Naive thymus-derived CD4-positive, alpha-beta T cell (primary cell): ENCODE measurements at regions of chr19 and their contacts with region 1.

Region 1: DNA sequence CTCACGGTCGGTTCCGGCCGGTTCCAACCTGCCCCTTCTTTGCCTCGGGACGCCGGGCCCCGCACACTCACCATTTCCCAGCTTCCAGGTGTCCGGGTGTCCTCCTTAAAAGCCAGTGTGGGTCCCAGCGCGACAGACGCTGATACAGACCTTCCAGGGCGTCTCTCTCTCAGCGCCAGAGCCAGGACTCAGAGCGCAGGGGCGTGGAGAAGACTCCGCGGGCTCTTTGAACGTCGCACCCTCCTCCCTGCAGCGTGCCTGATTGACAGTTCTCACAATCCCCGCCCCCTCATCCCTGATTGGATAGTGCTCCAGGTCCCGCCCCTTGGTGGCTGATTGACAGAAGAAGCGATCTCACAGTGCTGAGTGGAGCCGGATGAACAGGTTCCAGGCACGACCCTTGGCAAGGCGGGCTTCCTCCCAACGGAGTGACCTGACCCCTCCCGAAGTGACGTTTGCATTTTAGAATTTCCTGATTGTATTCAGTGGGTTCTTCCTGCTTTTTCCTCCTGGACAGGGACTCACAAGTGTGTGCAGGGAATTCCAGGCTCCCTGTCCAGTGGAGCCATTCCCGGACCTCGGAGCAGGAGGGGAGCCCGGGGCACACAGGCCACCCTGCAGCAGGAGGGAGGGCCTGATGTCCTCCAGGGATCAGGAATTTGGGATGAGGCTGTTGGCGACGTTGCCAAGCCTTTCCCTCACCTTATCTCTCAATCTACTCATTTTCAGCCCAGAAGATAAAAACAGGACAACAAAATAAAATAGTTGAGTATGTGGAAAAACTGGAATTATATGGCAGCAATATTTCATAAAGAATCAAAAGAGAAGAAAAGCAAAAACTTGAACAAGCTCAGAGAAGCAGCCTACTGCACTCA is at the start of gene ZNF823:
- DNase-seq: peak; percentile 85 to 98 (median 96)
- ATAC-seq: peak; percentile 100
- H3K4me3 ChIP-seq: peak within 1 kb of the TSS; percentile 75
- H3K4me3 Mint-ChIP-seq: peak within 1 kb of the TSS; percentile 94 to 100 (median 98)
- H3K27ac ChIP-seq: peak within 1 kb of the TSS; percentile 73
- H3K27ac Mint-ChIP-seq: peak within 1 kb of the TSS; percentile 82 to 98 (median 92)
- H3K4me1 ChIP-seq: peaks cover 0 to 11% of the 10 kb centered on the region in 2 donors
- H3K4me1 Mint-ChIP-seq: peaks cover 13 to 36% (median 25%) of the 10 kb centered on the region in 7 donors
- H3K27me3 ChIP-seq: no peaks in the 10 kb centered on the region
- H3K27me3 Mint-ChIP-seq: peaks cover 0 to 6% (median 4%) of the 10 kb centered on the region in 5 donors
- total RNA-seq, gene ZNF823: 1.8 to 6.8 (median 2.8) TPM

Region 2: DNA sequence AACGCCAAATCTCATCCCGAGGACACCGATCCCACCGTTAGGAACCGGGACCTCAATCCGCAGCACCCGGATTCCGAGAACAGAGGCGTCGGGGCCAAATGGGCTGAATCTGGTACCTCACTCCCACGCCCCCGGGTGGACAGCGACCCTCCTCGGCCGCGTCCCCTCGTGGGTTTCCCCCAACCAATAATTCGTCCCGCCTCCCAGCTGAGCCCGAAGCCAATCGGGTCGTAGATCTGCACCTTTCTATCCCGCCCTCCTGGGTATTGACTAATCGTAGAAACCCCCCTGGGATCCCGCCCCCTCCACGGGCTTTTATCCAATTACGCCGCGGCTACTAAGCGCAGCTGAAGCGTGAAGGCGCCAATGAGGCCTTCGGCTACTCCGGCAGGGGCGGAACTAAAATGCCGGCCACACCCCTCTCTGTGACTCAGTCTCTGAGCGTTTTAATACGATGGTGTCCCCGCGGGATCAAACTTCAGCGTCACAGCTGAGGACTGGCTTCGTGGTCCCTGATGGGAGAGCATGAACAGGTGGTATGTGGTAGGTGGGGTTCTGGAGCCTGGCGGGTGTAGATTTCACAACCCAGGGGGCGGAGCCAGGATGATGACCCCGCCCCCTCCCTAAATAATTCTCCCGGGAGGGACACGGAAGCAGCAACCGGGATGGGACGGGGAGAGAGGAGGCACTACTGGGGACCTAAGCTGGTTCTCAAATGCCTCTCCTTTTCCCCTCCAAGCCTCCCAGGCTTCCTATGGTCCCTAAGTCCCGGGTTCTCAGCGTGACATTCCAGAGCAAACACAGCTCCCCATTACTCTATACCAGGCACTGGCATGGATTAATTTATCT is 392.7 kb before region 1 on chr19 and contains the starts of genes CCDC159 and TMEM205:
- CTCF ChIA-PET with region 1: no interaction called
- POLR2A ChIA-PET with region 1: no interaction called
- intact Hi-C with region 1: loop called in 1 of 2 experiments (anchors 5 kb)
- DNase-seq: peak; percentile 82 to 99 (median 98)
- ATAC-seq: peak; percentile 98
- H3K4me3 ChIP-seq: peak within 1 kb of the TSS; percentile 75
- H3K4me3 Mint-ChIP-seq: peak within 1 kb of the TSS; percentile 92 to 100 (median 98)
- H3K27ac ChIP-seq: peak within 1 kb of the TSS; percentile 83
- H3K27ac Mint-ChIP-seq: peak within 1 kb of the TSS; percentile 89 to 98 (median 96)
- H3K4me1 ChIP-seq: peaks cover 13 to 14% of the 10 kb centered on the region in 2 donors
- H3K4me1 Mint-ChIP-seq: peaks cover 22 to 39% (median 29%) of the 10 kb centered on the region in 7 donors
- H3K27me3 ChIP-seq: no peaks in the 10 kb centered on the region
- H3K27me3 Mint-ChIP-seq: no peaks in the 10 kb centered on the region
- total RNA-seq, gene CCDC159: 17.6 to 87.4 (median 84.3) TPM
- total RNA-seq, gene TMEM205: 19.5 to 36.7 (median 29.5) TPM

Region 3: GRCh38 chr19:11597202-11598102 is 141.5 kb before region 1 on chr19 and contains the start of gene ZNF627:
- CTCF ChIA-PET with region 1: no interaction called
- POLR2A ChIA-PET with region 1: no interaction called
- intact Hi-C with region 1: loop called in 1 of 2 experiments (anchors 2 kb)
- DNase-seq: peak; percentile 87 to 98 (median 96)
- ATAC-seq: peak; percentile 100
- H3K4me3 ChIP-seq: peak within 1 kb of the TSS; percentile 85
- H3K4me3 Mint-ChIP-seq: peak within 1 kb of the TSS; percentile 87 to 96 (median 92)
- H3K27ac ChIP-seq: peak within 1 kb of the TSS; percentile 88
- H3K27ac Mint-ChIP-seq: peak within 1 kb of the TSS; percentile 68 to 95 (median 91)
- H3K4me1 ChIP-seq: peaks cover 3 to 14% of the 10 kb centered on the region in 2 donors
- H3K4me1 Mint-ChIP-seq: peaks cover 18 to 43% (median 27%) of the 10 kb centered on the region in 7 donors
- H3K27me3 ChIP-seq: no peaks in the 10 kb centered on the region
- H3K27me3 Mint-ChIP-seq: no peaks in the 10 kb centered on the region
- total RNA-seq, gene ZNF627: 5.2 to 15.4 (median 12.3) TPM

Region 4: GRCh38 chr19:11699931-11700794 is 38.8 kb before region 1 on chr19:
- CTCF ChIA-PET with region 1: interaction called, 5 read pairs
- POLR2A ChIA-PET with region 1: no interaction called
- intact Hi-C with region 1: loop called in 1 of 2 experiments (anchors 2 kb)
- DNase-seq: peak in 6 of 9 donors; percentile 10 to 34 (median 29)
- ATAC-seq: no peak
- H3K4me3 ChIP-seq: no peak overlapping the region
- H3K4me3 Mint-ChIP-seq: no peak overlapping the region
- H3K27ac ChIP-seq: no peak overlapping the region
- H3K27ac Mint-ChIP-seq: no peak overlapping the region
- H3K4me1 ChIP-seq: peaks cover 0 to under 1% of the 10 kb centered on the region in 2 donors
- H3K4me1 Mint-ChIP-seq: peaks cover 0 to 5% (median 4%) of the 10 kb centered on the region in 7 donors
- H3K27me3 ChIP-seq: peaks cover 0 to 2% of the 10 kb centered on the region in 2 donors
- H3K27me3 Mint-ChIP-seq: peaks cover 2 to 13% (median 6%) of the 10 kb centered on the region in 5 donors

Region 5: GRCh38 chr19:11766597-11767591 is 27.9 kb after region 1 on chr19 and contains the start of gene ZNF441:
- CTCF ChIA-PET with region 1: no interaction called
- POLR2A ChIA-PET with region 1: interaction called, 7 read pairs
- intact Hi-C with region 1: loop called (anchors 1 kb)
- DNase-seq: peak; percentile 76 to 89 (median 87)
- ATAC-seq: peak; percentile 98
- H3K4me3 ChIP-seq: peak within 1 kb of the TSS; percentile 70
- H3K4me3 Mint-ChIP-seq: peak within 1 kb of the TSS; percentile 94 to 99 (median 96)
- H3K27ac ChIP-seq: peak within 1 kb of the TSS; percentile 79
- H3K27ac Mint-ChIP-seq: peak within 1 kb of the TSS; percentile 90 to 98 (median 95)
- H3K4me1 ChIP-seq: peaks cover 4 to 7% of the 10 kb centered on the region in 2 donors
- H3K4me1 Mint-ChIP-seq: peaks cover 15 to 31% (median 27%) of the 10 kb centered on the region in 7 donors
- H3K27me3 ChIP-seq: no peaks in the 10 kb centered on the region
- H3K27me3 Mint-ChIP-seq: peaks cover 0 to 23% (median 5%) of the 10 kb centered on the region in 5 donors
- total RNA-seq, gene ZNF441: 3.9 to 23.8 (median 7.1) TPM

Region 6: DNA sequence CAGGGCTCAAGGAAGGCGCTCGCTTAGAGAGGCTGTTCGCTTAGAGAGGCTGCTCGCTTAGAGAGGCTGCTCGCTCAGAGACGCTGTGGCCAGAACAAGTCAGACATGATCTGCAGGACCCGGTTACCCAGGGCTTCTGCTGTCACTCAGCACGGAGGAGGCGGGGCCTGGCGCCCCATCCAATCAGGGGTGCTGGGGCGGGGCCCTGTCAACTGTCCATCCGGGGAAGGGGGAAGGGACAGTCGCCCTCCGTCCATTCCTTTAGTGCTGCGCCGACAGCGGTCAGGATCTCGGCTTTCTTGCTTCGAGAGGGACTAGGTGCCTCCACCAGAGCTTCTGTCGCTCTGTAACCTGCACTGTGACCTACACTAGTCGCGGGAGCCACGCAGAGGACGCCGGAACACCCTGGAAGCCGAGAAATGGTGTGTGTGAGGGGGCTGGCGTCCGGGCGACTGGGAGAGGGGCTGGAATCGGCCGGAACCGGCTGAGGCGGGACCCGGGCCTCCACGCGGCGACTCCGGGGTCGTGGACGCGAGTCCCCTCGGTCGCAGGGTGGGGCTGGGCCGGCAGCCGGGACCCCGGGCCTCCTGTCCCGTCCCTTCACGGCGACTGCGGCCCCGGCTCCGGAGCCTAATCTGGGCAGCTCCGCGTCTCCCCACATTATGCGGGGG is 75.2 kb after region 1 on chr19 and contains the start of gene ZNF440:
- CTCF ChIA-PET with region 1: no interaction called
- POLR2A ChIA-PET with region 1: no interaction called
- intact Hi-C with region 1: loop called in 1 of 2 experiments (anchors 2 kb)
- DNase-seq: peak; percentile 65 to 88 (median 73)
- ATAC-seq: peak; percentile 99
- H3K4me3 ChIP-seq: peak within 1 kb of the TSS; percentile 94
- H3K4me3 Mint-ChIP-seq: peak within 1 kb of the TSS; percentile 85 to 96 (median 92)
- H3K27ac ChIP-seq: peak within 1 kb of the TSS; percentile 66
- H3K27ac Mint-ChIP-seq: peak within 1 kb of the TSS; percentile 72 to 90 (median 81)
- H3K4me1 ChIP-seq: peaks cover 0 to 4% of the 10 kb centered on the region in 2 donors
- H3K4me1 Mint-ChIP-seq: peaks cover 10 to 39% (median 19%) of the 10 kb centered on the region in 7 donors
- H3K27me3 ChIP-seq: no peaks in the 10 kb centered on the region
- H3K27me3 Mint-ChIP-seq: no peaks in the 10 kb centered on the region
- total RNA-seq, gene ZNF440: 10.4 to 19.5 (median 16.0) TPM

Region 7: DNA sequence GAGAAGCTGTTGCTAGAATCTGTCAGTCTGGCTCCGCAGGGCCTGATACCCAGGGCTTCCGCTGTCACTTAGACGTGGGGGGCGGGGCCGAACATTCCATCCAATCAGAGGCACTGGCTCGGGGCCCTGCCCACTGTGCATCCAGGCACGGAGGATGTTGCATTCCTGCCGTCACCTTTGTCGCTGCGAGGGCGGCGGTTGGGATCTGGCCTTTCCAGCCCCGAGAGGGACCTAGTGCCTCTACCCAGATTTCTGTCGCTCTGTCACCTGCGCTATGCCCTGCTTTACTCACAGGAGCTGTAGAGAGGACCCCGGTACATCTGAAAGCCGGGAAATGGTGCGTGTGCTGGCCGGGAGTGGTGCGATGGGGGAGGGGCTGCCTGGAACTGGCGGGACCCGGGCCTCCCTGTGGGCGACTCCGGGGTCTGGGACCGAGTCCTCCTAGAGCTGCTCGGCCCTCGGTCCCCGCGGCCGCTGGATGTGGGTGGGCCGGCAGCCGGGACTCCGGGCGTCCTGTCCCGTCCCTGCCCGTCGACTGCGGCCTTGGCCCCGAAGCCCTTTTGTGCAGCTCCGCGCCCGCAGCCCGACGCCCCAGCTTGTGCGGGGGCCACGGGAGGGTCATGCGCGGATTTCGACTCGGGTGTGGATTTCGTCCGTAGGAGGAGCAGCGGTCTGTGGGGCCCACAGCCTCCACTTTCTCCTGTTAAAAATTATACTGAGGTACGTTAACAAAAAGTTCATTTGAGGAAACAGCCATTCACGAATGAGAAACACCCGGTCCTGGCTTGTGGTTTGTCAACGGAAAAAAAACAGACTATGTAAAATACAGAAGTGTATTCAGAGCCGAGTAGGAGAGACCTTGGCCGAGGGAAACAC is 109.8 kb after region 1 on chr19 and contains the start of gene ZNF439:
- CTCF ChIA-PET with region 1: no interaction called
- POLR2A ChIA-PET with region 1: no interaction called
- intact Hi-C with region 1: loop called in 1 of 2 experiments (anchors 1 kb)
- DNase-seq: peak; percentile 74 to 93 (median 86)
- ATAC-seq: peak; percentile 100
- H3K4me3 ChIP-seq: peak within 1 kb of the TSS; percentile 88
- H3K4me3 Mint-ChIP-seq: peak within 1 kb of the TSS; percentile 88 to 93 (median 91)
- H3K27ac ChIP-seq: peak within 1 kb of the TSS; percentile 66
- H3K27ac Mint-ChIP-seq: peak within 1 kb of the TSS; percentile 81 to 96 (median 90)
- H3K4me1 ChIP-seq: peaks cover 0 to 15% of the 10 kb centered on the region in 2 donors
- H3K4me1 Mint-ChIP-seq: peaks cover 13 to 42% (median 24%) of the 10 kb centered on the region in 7 donors
- H3K27me3 ChIP-seq: no peaks in the 10 kb centered on the region
- H3K27me3 Mint-ChIP-seq: no peaks in the 10 kb centered on the region
- total RNA-seq, gene ZNF439: 5.6 to 22.5 (median 14.1) TPM